A549 (cell line): ENCODE measurements at regions of chr7 and their contacts with region 1.

Region 1: DNA sequence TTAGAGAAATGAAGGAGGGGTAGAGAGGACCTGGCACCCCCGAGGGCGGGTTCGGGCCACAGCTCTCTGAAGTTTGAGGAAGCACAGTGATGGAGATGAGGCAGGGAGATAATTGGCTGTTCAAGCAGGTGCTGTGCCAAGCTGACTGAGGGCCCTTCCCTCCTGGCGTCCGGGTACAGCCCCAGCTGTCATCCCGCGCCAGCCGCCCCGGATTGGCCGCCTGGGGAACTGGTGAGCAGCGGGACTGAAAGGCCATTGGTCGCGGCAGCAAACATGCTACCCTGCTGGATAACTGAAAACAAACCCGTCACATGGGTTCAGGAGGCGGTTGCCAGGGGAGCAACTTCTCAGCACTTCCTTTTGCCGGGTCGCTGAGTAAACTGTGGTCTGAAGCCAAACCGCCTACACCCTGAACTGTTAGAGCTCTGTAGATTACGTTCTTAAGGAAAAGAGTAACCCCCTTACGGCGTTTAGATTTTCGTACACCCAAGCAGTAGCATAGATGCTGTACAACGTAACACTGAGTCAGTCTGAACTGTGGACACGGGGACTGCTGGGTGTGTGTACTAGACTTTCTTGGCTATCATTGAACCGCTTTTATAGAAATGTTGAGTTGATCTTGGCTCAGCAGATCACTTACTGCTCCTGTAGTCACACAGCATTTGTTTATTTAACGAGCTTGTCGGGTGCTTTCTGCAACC is 1.3 kb downstream of the INSIG1 start:
- DNase-seq: peak; percentile 93 to 98
- ATAC-seq: peak; percentile 83 to 93
- H3K4me3 ChIP-seq: peak overlapping the region; percentile 90
- H3K27ac ChIP-seq: peak overlapping the region; percentile 98
- H3K4me1 ChIP-seq: peaks cover 23% of the 10 kb centered on the region
- CTCF ChIP-seq: no peak
- EP300 ChIP-seq: no peak
- POLR2A ChIP-seq: no peak
- RAD21 ChIP-seq: no peak

Region 2: GRCh38 chr7:155205368-155206317 is 93.3 kb before region 1 on chr7:
- CTCF ChIA-PET with region 1: interaction called, 5 read pairs
- POLR2A ChIA-PET with region 1: interaction called, 23 read pairs
- DNase-seq: peak; percentile 95 to 98
- ATAC-seq: peak; percentile 92 to 96
- H3K4me3 ChIP-seq: peak overlapping the region; percentile 35
- H3K27ac ChIP-seq: peak overlapping the region; percentile 69 to 84
- H3K4me1 ChIP-seq: peaks cover 21% of the 10 kb centered on the region
- CTCF ChIP-seq: no peak
- EP300 ChIP-seq: peak in 1 of 2 experiments; percentile 37; a peak in 1 of 5 replicates
- POLR2A ChIP-seq: peak; percentile 28; the same call in 1 of the 2 replicates
- RAD21 ChIP-seq: no peak; a peak in 1 of 5 replicates

Region 3: DNA sequence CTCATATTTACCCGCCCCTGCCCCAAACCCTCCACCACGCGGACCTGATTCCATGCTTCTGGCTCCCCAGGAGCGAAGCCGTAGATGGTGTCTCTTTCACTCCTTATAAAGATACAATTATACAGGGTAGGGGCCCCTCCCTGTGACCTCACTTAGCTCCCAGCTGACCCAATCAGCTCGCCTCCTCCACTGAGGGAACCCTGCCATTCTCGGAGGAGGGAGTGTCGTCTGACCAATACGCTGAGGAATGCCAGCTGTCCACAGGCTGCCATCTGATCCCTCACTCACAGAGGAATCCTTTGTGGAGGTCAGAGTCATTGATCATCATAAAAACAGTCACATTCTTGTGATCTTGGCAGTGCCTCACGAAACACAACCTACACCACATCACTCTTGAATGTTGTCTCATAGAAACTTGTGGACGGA is 68.8 kb before region 1 on chr7:
- CTCF ChIA-PET with region 1: no interaction called
- POLR2A ChIA-PET with region 1: interaction called, 16 read pairs
- DNase-seq: peak; percentile 90 to 96
- ATAC-seq: peak; percentile 84 to 88
- H3K4me3 ChIP-seq: no peak overlapping the region
- H3K27ac ChIP-seq: peak overlapping the region in 1 of 2 experiments; percentile 58; a peak in 3 of 6 replicates
- H3K4me1 ChIP-seq: peaks cover 37% of the 10 kb centered on the region
- CTCF ChIP-seq: no peak
- EP300 ChIP-seq: no peak
- POLR2A ChIP-seq: no peak
- RAD21 ChIP-seq: no peak